Tibial artery (tissue), 4 donors: ENCODE measurements at regions of chr14 and their contacts with region 1.

Region 1: DNA sequence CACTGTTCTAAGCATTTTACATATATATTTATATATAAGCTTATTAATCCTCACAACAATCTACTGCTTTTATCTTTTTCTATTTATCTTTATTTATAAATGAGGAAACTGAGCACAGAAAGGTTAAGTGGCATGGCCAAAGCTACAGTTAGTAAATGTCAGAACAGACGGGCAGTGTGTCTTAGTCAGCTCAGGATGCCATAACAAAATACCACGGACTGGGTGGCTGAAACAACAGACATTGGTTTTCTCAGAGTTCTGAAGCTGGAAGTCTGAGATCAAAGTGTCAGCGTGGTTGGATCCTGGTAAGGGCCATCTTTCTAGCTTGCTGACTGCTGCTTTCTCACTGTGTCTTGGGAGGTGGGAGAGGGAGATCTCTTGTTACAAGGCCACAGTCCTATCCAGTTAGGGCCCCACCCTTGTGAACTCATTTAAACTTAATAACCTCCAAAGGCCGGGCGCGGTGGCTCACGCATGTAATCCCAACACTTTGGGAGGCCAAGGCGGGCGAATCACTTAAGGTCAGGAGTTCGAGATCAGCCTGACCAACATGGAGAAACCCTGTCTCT is 19.8 kb downstream of the RPGRIP1 start:
- DNase-seq: no peak
- H3K4me3 ChIP-seq: no peak overlapping the region
- H3K27ac ChIP-seq: no peak overlapping the region
- H3K4me1 ChIP-seq: peaks cover 0 to 6% (median 2%) of the 10 kb centered on the region in 4 donors
- H3K27me3 ChIP-seq: peaks cover 0 to 16% of the 10 kb centered on the region in 2 donors
- CTCF ChIP-seq: no peak

Region 2: DNA sequence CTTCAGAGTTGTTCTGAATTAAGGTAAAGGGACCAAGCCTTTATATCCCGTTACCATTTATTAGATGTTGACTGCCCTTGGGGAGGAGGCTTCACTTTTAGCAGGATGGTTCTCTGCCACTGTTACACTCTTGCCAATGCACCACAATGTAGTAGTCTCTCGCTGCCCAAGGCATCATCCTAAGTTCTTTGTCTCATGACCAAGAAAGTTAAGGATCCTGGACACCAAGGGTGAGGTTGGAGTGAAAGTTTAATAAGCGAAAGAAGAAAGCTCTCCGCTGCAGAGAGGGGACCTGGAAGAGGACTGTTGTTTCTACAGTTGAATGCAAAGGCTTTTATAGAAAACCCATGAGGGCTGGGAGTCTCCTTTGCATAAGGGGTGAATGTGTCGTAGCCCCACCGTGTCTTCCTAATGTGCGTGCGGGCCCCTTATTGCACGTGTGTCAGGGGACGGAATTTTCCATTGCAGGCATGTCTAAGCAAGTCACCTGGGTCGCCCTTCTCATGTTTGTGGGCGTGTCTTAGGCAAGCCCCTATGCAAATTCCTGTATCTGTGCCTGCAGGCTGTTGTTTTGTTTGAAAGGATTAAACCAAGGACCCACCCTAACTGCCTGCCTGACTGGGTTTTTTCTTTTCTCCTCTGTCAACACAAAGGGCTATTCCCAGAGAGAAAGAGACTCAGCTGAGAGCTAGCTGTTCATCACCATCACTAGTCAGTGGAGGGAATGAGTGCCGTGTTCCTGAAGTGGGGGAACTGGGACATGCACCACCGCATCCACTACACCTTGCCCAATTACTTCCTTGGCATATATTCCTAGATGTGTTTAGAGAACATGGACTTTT is 479.4 kb before region 1 on chr14:
- intact Hi-C with region 1: loop called (anchors 5 kb)
- DNase-seq: no peak
- H3K4me3 ChIP-seq: no peak overlapping the region
- H3K27ac ChIP-seq: no peak overlapping the region
- H3K4me1 ChIP-seq: no peaks in the 10 kb centered on the region
- H3K27me3 ChIP-seq: no peaks in the 10 kb centered on the region
- CTCF ChIP-seq: no peak

Region 3: GRCh38 chr14:21003788-21004346 is 295.8 kb before region 1 on chr14:
- intact Hi-C with region 1: no loop called
- DNase-seq: no peak
- H3K4me3 ChIP-seq: no peak overlapping the region
- H3K27ac ChIP-seq: no peak overlapping the region
- H3K4me1 ChIP-seq: peaks cover 0 to 6% (median under 1%) of the 10 kb centered on the region in 4 donors
- H3K27me3 ChIP-seq: no peaks in the 10 kb centered on the region
- CTCF ChIP-seq: no peak

Region 4: GRCh38 chr14:21367582-21368144 is 68.0 kb after region 1 on chr14:
- intact Hi-C with region 1: no loop called
- DNase-seq: no peak
- H3K4me3 ChIP-seq: no peak overlapping the region
- H3K27ac ChIP-seq: no peak overlapping the region
- H3K4me1 ChIP-seq: no peaks in the 10 kb centered on the region
- H3K27me3 ChIP-seq: no peaks in the 10 kb centered on the region
- CTCF ChIP-seq: no peak